ENCODE measurements at regions of chr12 and their contacts with region 1.

Region 1: DNA sequence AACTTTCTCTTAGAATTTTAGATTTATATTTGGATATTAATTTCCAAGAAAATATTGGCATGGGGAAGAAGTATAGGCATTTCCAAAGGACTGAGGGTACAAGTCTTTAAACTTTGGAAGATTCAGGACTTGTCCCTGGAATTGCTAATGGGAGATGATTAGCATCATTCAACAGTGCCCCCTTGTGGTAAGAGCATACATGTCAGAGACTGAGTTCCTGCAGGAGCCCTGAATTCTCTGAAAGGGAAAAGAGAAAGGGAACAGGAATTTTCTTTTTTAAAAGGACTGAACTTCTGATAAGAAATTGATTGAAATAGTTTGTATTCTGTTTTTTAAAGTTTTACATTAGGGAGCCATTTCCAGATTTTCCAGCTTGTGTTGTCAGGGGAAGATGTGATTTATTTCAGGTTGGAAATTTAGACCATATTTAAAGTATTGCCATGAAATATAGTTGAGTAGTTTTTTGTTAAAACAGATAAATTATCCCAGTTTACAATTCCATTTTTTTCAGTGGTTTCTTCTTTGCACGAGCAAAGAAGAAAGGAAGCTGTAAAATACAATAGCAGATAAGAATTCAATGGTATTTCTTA is 44.0 kb upstream of the REP15 start:
- DNase-seq: peak; percentile 35 to 76
- H3K4me3 ChIP-seq: no peak overlapping the region
- H3K27ac ChIP-seq: no peak overlapping the region
- H3K4me1 ChIP-seq: no peaks in the 10 kb centered on the region
- H3K27me3 ChIP-seq: no peaks in the 10 kb centered on the region
- CTCF ChIP-seq: peak; percentile 77 to 91 (median 80)
- POLR2A ChIP-seq: no peak

Region 2: GRCh38 chr12:27434673-27435565 is 217.3 kb before region 1 on chr12:
- intact Hi-C with region 1: loop called (anchors 10 kb)
- DNase-seq: no peak
- H3K4me3 ChIP-seq: no peak overlapping the region
- H3K27ac ChIP-seq: no peak overlapping the region
- H3K4me1 ChIP-seq: no peaks in the 10 kb centered on the region
- H3K27me3 ChIP-seq: no peaks in the 10 kb centered on the region
- CTCF ChIP-seq: peak in 3 of 4 experiments; percentile 39 to 74 (median 63)
- POLR2A ChIP-seq: no peak

Region 3: DNA sequence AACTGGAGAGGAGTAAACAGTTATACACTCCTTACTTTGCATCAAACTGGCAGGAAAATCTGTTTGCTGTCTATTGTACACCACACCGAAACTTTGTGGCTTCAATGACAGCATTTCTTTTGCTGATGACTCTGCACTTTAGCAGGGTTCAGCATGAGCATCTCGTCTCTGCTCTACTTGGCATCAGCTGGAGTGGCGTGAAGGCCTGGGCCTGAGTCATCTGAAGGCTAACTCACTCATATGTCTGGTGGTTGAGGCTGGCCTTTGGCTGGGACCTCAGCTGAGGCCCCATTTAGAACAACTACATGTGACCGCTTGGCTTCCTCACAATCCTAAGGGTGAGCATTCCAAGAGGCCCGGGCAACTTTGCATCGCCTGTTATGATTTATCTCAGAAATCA is 15.3 kb after region 1 on chr12:
- intact Hi-C with region 1: no loop called
- DNase-seq: no peak
- H3K4me3 ChIP-seq: no peak overlapping the region
- H3K27ac ChIP-seq: no peak overlapping the region
- H3K4me1 ChIP-seq: no peaks in the 10 kb centered on the region
- H3K27me3 ChIP-seq: no peaks in the 10 kb centered on the region
- CTCF ChIP-seq: no peak
- POLR2A ChIP-seq: no peak